SK-N-SH (cell line): ENCODE measurements at regions of chr11 and their contacts with region 1.

Region 1: DNA sequence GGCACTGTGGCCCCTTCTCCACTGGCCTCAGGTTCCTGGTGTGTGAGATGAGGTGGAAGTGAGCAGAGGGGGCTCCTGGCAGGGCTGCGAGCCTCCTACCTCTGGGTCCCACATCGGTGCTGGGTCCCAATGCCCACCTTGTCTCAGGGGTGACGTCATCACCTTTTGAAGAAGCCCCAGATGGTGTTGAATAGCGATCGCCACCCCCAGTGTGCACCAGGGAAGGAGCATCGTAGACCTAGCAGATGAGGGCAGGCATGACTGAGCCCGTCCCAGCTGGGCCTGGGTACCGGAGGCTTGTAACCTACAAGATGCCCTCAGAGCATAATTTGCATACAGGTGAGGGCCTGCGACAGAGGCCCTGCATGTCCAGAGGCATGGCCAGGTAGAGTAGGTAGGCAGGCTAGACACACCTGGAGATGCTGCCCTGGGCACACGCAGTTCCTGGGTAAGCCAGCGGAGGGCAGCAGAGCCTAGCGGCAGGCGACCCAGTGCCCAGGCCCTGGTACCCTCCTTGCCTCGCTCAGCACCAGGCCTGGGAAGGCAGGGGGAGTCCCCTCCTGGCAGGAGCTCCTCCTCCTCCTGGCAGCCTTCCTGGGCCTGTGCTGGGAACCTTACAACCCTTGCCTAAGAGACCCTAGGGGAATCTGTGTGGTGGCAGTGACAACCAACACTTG is 52.5 kb downstream of the TPCN2 start:
- DNase-seq: peak; percentile 96
- H3K4me3 ChIP-seq: peak overlapping the region in 1 of 2 experiments; percentile 16; a peak in 1 of 4 replicates
- H3K27ac ChIP-seq: no peak overlapping the region; a peak in 1 of 4 replicates
- H3K4me1 ChIP-seq: peaks cover 10 to 27% of the 10 kb centered on the region in 2 experiments; a peak in 2 of 4 replicates
- H3K27me3 ChIP-seq: no peaks in the 10 kb centered on the region
- CTCF ChIP-seq: peak; percentile 98
- EP300 ChIP-seq: no peak
- RAD21 ChIP-seq: peak; percentile 99

Region 2: GRCh38 chr11:69115586-69116560 is 14.6 kb after region 1 on chr11:
- CTCF ChIA-PET with region 1: interaction called, 18 read pairs
- POLR2A ChIA-PET with region 1: no interaction called
- DNase-seq: no peak
- H3K4me3 ChIP-seq: no peak overlapping the region
- H3K27ac ChIP-seq: no peak overlapping the region
- H3K4me1 ChIP-seq: no peaks in the 10 kb centered on the region; a peak in 1 of 4 replicates
- H3K27me3 ChIP-seq: no peaks in the 10 kb centered on the region
- CTCF ChIP-seq: no peak
- EP300 ChIP-seq: no peak
- RAD21 ChIP-seq: no peak

Region 3: DNA sequence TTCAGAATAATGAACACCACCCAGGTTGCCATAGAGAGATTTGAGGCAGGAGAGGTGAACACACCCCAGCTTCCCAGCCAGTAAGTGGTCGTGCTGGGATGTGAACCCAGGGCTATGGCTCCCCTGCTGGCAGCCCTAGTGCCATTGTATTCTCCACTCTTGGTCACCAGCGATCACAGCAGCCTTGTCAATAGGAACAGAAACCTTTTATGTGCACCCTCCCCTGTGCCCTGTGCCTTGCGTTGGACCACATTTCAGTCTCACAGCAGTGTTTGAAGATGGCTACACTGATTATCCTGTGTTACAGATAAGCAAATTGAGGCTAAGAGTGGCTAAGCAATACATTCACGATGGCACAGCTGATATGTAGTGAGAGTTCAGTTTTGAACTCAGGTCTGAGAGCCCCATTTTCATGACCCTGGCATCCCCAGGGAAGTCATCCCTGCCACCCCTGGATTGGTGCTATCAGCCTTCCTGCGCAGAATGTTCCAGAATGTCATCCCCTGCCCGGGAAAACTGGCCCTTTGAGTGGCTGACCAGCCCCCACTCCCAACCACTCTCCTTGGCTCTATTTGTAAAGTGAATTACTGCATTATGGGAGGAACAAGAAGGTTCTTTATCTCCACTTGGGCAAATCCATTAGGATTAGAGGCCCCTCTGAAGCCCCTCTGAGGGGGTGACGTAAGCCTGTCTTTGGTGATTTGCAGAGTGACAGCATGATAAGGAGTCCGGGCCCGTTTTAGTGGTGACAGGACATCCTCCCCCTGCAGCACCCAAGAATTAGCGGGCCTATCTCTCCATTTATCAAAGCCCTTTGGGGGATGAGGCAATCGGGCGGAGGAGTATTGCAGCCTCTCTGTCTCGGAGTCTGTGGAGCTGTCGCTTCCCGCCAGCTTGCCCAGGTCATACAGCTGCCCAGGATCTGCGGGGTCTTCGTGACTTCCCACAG is 85.3 kb after region 1 on chr11:
- CTCF ChIA-PET with region 1: interaction called, 12 read pairs
- POLR2A ChIA-PET with region 1: interaction called, 6 read pairs
- DNase-seq: peak; percentile 88
- H3K4me3 ChIP-seq: no peak overlapping the region
- H3K27ac ChIP-seq: peak overlapping the region in 1 of 2 experiments; percentile 94; a peak in 3 of 4 replicates
- H3K4me1 ChIP-seq: peaks cover 0 to 14% of the 10 kb centered on the region in 2 experiments; a peak in 2 of 4 replicates
- H3K27me3 ChIP-seq: peaks cover 4% of the 10 kb centered on the region; the same call in 1 of the 2 replicates
- CTCF ChIP-seq: peak; percentile 26
- EP300 ChIP-seq: peak; percentile 62 to 96; a peak in 3 of 4 replicates
- RAD21 ChIP-seq: peak; percentile 65

Region 4: DNA sequence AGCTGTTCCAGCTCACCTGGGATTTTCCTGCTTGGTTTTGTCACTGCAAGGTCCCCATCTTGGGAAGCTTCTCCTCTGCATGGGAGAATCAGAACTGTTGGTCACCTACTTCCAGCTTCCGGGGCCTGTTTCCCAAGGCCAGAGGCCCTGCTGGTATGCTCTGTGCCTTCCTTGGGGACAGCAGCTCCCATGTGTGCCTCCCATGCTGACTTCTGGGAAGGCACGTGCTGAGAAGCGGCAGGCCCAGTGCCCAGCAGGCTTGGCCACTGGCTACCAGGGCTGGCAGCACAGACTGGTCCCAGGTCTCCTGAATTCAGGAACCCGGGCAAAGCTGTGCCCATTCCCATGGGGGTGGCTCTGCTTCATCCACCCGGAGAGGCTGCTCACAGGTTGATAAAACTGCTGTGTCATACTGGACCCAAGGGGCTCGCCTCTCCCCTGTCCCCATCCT is 226.5 kb after region 1 on chr11:
- CTCF ChIA-PET with region 1: no interaction called
- POLR2A ChIA-PET with region 1: no interaction called
- DNase-seq: no peak
- H3K4me3 ChIP-seq: no peak overlapping the region
- H3K27ac ChIP-seq: no peak overlapping the region
- H3K4me1 ChIP-seq: no peaks in the 10 kb centered on the region
- H3K27me3 ChIP-seq: no peaks in the 10 kb centered on the region
- CTCF ChIP-seq: no peak
- EP300 ChIP-seq: no peak
- RAD21 ChIP-seq: no peak

Region 5: GRCh38 chr11:69443138-69443967 is 342.1 kb after region 1 on chr11:
- CTCF ChIA-PET with region 1: interaction called, 17 read pairs
- POLR2A ChIA-PET with region 1: interaction called, 4 read pairs
- DNase-seq: peak; percentile 98
- H3K4me3 ChIP-seq: peak overlapping the region; percentile 38 to 49
- H3K27ac ChIP-seq: peak overlapping the region; percentile 91 to 99
- H3K4me1 ChIP-seq: peaks cover 26 to 37% of the 10 kb centered on the region in 2 experiments
- H3K27me3 ChIP-seq: no peaks in the 10 kb centered on the region
- CTCF ChIP-seq: no peak
- EP300 ChIP-seq: peak; percentile 51 to 67; a peak in 3 of 4 replicates
- RAD21 ChIP-seq: 0 out of 2 replicates have a peak, but pooled peaks have one; percentile 22

Region 6: GRCh38 chr11:69662017-69662698 is 560.9 kb after region 1 on chr11:
- CTCF ChIA-PET with region 1: interaction called, 254 read pairs
- POLR2A ChIA-PET with region 1: no interaction called
- DNase-seq: peak; percentile 61
- H3K4me3 ChIP-seq: no peak overlapping the region
- H3K27ac ChIP-seq: no peak overlapping the region
- H3K4me1 ChIP-seq: no peaks in the 10 kb centered on the region
- H3K27me3 ChIP-seq: no peaks in the 10 kb centered on the region
- CTCF ChIP-seq: peak; percentile 34
- EP300 ChIP-seq: no peak
- RAD21 ChIP-seq: no peak